Left lung (tissue), 14 donors: ENCODE measurements at regions of chr17 and their contacts with region 1.

Region 1: GRCh38 chr17:4412933-4413831 is 20.6 kb upstream of the SPNS3 start:
- DNase-seq: peak; percentile 89 to 97 (median 93)
- ATAC-seq: peak; percentile 99
- H3K4me3 ChIP-seq: no peak overlapping the region
- H3K27ac ChIP-seq: peak overlapping the region in 1 of 2 donors; percentile 33
- H3K4me1 ChIP-seq: peaks cover 0 to 5% of the 10 kb centered on the region in 2 donors
- H3K27me3 ChIP-seq: no peaks in the 10 kb centered on the region
- CTCF ChIP-seq: peak; percentile 81 to 91

Region 2: GRCh38 chr17:4199818-4200402 is 213.3 kb before region 1 on chr17:
- intact Hi-C with region 1: loop called in 1 of 2 experiments (anchors 5 kb)
- DNase-seq: peak in 1 of 4 donors; percentile 21
- ATAC-seq: peak; percentile 69
- H3K4me3 ChIP-seq: no peak overlapping the region
- H3K27ac ChIP-seq: no peak overlapping the region
- H3K4me1 ChIP-seq: no peaks in the 10 kb centered on the region
- H3K27me3 ChIP-seq: no peaks in the 10 kb centered on the region
- CTCF ChIP-seq: peak; percentile 68 to 75

Region 3: GRCh38 chr17:4215882-4216570 is 197.2 kb before region 1 on chr17:
- intact Hi-C with region 1: loop called (anchors 5 to 10 kb)
- DNase-seq: peak in 1 of 4 donors; percentile 35
- ATAC-seq: no peak
- H3K4me3 ChIP-seq: no peak overlapping the region
- H3K27ac ChIP-seq: no peak overlapping the region
- H3K4me1 ChIP-seq: peaks cover 0 to 12% of the 10 kb centered on the region in 2 donors
- H3K27me3 ChIP-seq: no peaks in the 10 kb centered on the region
- CTCF ChIP-seq: no peak

Region 4: DNA sequence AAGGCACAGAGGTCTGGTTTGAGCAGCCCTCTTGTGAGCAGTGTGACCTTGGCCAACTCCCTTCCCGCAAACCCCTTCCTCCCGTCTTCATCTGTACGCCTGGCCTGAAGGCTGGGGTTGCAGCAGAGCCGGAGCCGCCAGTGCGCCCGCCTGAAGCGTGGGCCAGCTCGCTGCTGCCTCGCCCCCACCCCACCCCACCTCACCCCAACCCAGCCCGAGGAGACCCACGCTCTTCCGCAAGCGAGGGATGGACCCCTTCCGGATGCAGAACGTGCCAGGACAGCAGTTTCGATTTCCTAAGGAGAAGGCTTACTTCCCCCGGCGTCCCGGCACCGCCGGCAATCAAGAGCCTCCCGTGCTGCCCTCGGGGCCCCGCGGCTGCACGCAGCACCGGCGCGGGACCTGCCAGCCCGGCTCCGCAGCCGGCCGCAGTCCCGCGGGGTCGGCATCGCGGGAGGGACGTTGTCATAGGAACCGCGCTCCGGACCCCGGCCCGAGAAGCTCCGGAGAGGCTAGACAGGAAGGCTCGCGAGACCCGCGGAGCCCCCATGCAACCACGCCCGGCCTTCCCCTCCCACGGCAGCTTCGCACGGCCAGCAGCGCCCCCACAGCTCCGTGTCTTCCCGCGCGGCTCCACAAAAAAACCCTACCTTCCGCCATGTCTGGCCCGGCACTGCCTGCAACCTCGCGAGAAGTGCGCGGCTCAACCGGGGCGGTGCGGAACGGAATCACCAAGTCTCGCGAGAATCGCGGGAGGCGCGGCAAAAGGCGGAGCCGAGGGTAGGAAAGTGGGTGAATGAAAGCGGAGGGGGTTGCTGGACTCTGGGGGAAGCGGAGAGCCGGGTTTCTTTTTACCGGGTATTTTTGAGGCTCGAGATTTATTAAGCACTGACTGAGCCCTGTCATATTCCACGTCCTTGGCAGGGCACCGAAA is 149.6 kb before region 1 on chr17 and contains the start of gene ANKFY1:
- intact Hi-C with region 1: no loop called
- DNase-seq: peak; percentile 97 to 99 (median 98)
- ATAC-seq: peak; percentile 98
- H3K4me3 ChIP-seq: peak within 1 kb of the TSS; percentile 80 to 94
- H3K27ac ChIP-seq: peak within 1 kb of the TSS; percentile 70 to 87
- H3K4me1 ChIP-seq: peaks cover 14 to 35% of the 10 kb centered on the region in 2 donors
- H3K27me3 ChIP-seq: no peaks in the 10 kb centered on the region
- CTCF ChIP-seq: no peak
- polyA plus RNA-seq, gene ANKFY1: 52.9 to 63.9 (median 55.2) TPM

Region 5: GRCh38 chr17:4554997-4555799 is 142.0 kb after region 1 on chr17 and contains the start of gene MYBBP1A:
- intact Hi-C with region 1: no loop called
- DNase-seq: peak; percentile 93 to 100 (median 98)
- ATAC-seq: peak; percentile 93
- H3K4me3 ChIP-seq: peak within 1 kb of the TSS; percentile 93 to 98
- H3K27ac ChIP-seq: peak within 1 kb of the TSS; percentile 78 to 92
- H3K4me1 ChIP-seq: peaks cover 13 to 25% of the 10 kb centered on the region in 2 donors
- H3K27me3 ChIP-seq: no peaks in the 10 kb centered on the region
- CTCF ChIP-seq: peak in 1 of 2 donors; percentile 24
- polyA plus RNA-seq, gene MYBBP1A: 28.6 to 51.5 (median 40.6) TPM